Ovary (tissue), 10 donors: ENCODE measurements at regions of chr6 and their contacts with region 1.

Region 1: GRCh38 chr6:137866914-137867684 is at the start of gene TNFAIP3:
- DNase-seq: peak; percentile 90 to 96 (median 93)
- H3K4me3 ChIP-seq: peak within 1 kb of the TSS; percentile 93
- H3K27ac ChIP-seq: peak within 1 kb of the TSS; percentile 85 to 88
- H3K4me1 ChIP-seq: peaks cover 8% of the 10 kb centered on the region
- H3K27me3 ChIP-seq: no peaks in the 10 kb centered on the region
- CTCF ChIP-seq: peak; percentile 79 to 92 (median 84)
- EP300 ChIP-seq: peak; percentile 80
- POLR2A ChIP-seq: peak; percentile 85
- total RNA-seq, gene TNFAIP3: 57.3 to 206 (median 99.5) TPM

Region 2: GRCh38 chr6:137799950-137800568 is 67.0 kb before region 1 on chr6:
- intact Hi-C with region 1: loop called in 2 of 4 experiments (anchors 5 to 10 kb)
- DNase-seq: peak in 3 of 5 donors; percentile 32 to 76 (median 37)
- H3K4me3 ChIP-seq: no peak overlapping the region
- H3K27ac ChIP-seq: no peak overlapping the region
- H3K4me1 ChIP-seq: peaks cover 4% of the 10 kb centered on the region
- H3K27me3 ChIP-seq: no peaks in the 10 kb centered on the region
- CTCF ChIP-seq: peak in 2 of 3 donors; percentile 29 to 74
- EP300 ChIP-seq: no peak
- POLR2A ChIP-seq: no peak

Region 3: DNA sequence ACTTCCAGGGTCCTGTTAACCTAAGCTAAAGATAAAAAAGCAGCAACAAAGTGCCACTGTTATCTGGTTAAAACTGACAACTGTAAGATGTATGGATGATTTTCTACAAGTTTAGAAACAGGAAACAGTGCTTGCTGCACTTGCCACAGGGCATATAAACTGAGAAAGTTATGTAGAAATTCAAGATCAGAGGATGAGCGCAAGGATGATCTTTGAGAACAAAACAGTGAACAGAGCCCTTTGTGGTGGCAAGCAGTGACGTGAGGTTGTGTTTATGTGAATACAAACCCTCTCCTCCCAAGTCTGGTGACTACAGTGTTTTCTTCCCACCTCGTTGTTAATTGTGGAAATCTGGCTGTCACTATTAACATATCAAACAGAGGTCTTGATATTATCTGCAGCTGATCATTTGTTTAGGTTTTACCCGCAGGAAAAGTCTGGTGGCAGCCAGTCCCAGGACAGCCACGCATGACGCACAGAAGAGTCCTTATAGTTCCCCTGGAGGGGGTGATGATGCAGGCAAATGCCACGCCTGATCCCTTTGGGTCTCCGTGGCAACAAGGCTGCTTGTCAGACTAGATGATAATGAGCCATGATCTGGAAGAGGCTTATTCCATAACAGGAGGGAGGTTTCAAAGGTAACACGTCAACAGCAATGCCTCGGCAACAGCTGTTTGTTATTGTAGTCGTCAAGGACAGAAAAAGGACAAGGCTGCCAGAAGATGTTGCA is 43.1 kb before region 1 on chr6:
- intact Hi-C with region 1: loop called in 1 of 4 experiments (anchors 5 kb)
- DNase-seq: peak; percentile 45 to 76 (median 52)
- H3K4me3 ChIP-seq: no peak overlapping the region
- H3K27ac ChIP-seq: peak overlapping the region; percentile 23 to 62
- H3K4me1 ChIP-seq: peaks cover 12% of the 10 kb centered on the region
- H3K27me3 ChIP-seq: no peaks in the 10 kb centered on the region
- CTCF ChIP-seq: no peak
- EP300 ChIP-seq: no peak
- POLR2A ChIP-seq: no peak

Region 4: GRCh38 chr6:137944793-137945498 is 77.8 kb after region 1 on chr6:
- intact Hi-C with region 1: loop called in 2 of 4 experiments (anchors 5 to 10 kb)
- DNase-seq: peak in 2 of 5 donors; percentile 14 to 31
- H3K4me3 ChIP-seq: no peak overlapping the region
- H3K27ac ChIP-seq: no peak overlapping the region
- H3K4me1 ChIP-seq: no peaks in the 10 kb centered on the region
- H3K27me3 ChIP-seq: no peaks in the 10 kb centered on the region
- CTCF ChIP-seq: peak; percentile 52 to 86 (median 77)
- EP300 ChIP-seq: no peak
- POLR2A ChIP-seq: no peak